ENCODE measurements at regions of chr19 and their contacts with region 1.

Region 1: GRCh38 chr19:49640113-49640898 is at the start of gene RRAS:
- H3K4me3 Mint-ChIP-seq: peak within 1 kb of the TSS; percentile 99
- H3K27ac Mint-ChIP-seq: peak within 1 kb of the TSS; percentile 100
- H3K4me1 Mint-ChIP-seq: peaks cover 70% of the 10 kb centered on the region
- H3K27me3 Mint-ChIP-seq: peaks cover 3% of the 10 kb centered on the region

Region 2: GRCh38 chr19:49451430-49452181 is 188.7 kb before region 1 on chr19 and contains the start of gene PIH1D1:
- intact Hi-C with region 1: loop called (anchors 5 kb)
- H3K4me3 Mint-ChIP-seq: peak within 1 kb of the TSS; percentile 99
- H3K27ac Mint-ChIP-seq: peak within 1 kb of the TSS; percentile 98
- H3K4me1 Mint-ChIP-seq: peaks cover 66% of the 10 kb centered on the region
- H3K27me3 Mint-ChIP-seq: no peaks in the 10 kb centered on the region

Region 3: GRCh38 chr19:49580264-49581006 is 59.9 kb before region 1 on chr19 and contains the start of gene NOSIP:
- intact Hi-C with region 1: loop called (anchors 1 kb)
- H3K4me3 Mint-ChIP-seq: peak within 1 kb of the TSS; percentile 85
- H3K27ac Mint-ChIP-seq: peak within 1 kb of the TSS; percentile 89
- H3K4me1 Mint-ChIP-seq: peaks cover 35% of the 10 kb centered on the region
- H3K27me3 Mint-ChIP-seq: no peaks in the 10 kb centered on the region

Region 4: DNA sequence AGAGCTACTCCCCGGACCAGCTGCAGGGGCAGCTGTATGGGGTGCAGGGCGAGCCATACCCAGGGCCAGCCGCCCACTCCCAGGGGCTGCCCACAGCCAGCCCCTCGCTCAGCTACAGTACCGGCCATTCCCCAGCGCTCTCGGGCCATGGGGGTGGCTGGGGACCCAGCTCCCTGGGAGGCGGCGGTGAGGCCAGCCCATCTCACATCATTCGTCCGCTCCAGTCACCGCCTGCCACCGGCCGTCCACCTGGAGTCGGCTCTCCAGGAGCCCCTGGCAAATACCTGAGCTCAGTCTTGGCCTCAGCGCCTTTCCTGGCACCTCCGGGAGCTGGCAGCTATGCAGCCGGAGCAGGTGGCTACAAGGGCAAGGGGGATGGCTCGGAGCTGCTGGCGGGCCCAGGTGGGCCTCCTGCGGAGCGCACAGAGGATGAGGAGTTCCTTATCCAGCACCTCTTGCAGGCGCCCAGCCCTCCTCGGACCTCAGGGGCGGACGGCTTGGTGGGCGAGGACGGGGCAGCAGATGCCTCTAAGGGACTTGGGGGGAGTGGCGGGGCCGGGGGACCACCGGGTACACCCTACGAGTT is 44.4 kb before region 1 on chr19:
- intact Hi-C with region 1: no loop called
- H3K4me3 Mint-ChIP-seq: no peak overlapping the region
- H3K27ac Mint-ChIP-seq: no peak overlapping the region
- H3K4me1 Mint-ChIP-seq: peaks cover 46% of the 10 kb centered on the region
- H3K27me3 Mint-ChIP-seq: no peaks in the 10 kb centered on the region

Region 5: DNA sequence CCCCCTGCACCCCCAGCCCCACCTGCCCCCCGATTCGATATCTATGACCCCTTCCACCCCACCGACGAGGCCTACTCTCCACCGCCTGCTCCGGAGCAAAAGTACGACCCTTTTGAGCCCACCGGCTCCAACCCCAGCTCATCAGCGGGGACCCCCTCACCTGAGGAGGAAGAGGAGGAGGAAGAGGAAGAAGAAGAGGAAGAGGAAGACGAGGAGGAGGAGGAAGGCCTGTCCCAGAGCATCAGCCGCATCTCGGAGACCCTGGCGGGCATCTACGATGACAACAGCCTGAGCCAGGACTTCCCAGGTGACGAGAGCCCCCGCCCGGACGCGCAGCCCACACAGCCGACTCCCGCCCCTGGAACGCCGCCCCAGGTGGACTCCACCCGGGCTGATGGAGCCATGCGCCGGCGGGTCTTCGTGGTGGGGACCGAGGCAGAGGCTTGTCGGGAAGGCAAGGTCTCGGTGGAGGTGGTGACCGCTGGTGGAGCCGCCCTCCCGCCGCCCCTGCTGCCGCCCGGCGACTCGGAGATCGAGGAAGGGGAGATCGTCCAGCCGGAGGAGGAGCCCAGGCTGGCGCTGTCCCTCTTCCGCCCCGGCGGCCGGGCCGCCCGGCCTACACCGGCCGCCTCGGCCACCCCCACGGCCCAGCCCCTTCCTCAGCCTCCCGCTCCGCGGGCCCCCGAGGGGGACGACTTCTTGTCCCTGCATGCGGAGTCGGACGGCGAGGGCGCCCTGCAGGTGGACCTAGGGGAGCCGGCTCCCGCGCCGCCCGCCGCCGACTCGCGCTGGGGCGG is 10.9 kb after region 1 on chr19:
- intact Hi-C with region 1: no loop called
- H3K4me3 Mint-ChIP-seq: no peak overlapping the region
- H3K27ac Mint-ChIP-seq: no peak overlapping the region
- H3K4me1 Mint-ChIP-seq: peaks cover under 1% of the 10 kb centered on the region
- H3K27me3 Mint-ChIP-seq: no peaks in the 10 kb centered on the region

Region 6: DNA sequence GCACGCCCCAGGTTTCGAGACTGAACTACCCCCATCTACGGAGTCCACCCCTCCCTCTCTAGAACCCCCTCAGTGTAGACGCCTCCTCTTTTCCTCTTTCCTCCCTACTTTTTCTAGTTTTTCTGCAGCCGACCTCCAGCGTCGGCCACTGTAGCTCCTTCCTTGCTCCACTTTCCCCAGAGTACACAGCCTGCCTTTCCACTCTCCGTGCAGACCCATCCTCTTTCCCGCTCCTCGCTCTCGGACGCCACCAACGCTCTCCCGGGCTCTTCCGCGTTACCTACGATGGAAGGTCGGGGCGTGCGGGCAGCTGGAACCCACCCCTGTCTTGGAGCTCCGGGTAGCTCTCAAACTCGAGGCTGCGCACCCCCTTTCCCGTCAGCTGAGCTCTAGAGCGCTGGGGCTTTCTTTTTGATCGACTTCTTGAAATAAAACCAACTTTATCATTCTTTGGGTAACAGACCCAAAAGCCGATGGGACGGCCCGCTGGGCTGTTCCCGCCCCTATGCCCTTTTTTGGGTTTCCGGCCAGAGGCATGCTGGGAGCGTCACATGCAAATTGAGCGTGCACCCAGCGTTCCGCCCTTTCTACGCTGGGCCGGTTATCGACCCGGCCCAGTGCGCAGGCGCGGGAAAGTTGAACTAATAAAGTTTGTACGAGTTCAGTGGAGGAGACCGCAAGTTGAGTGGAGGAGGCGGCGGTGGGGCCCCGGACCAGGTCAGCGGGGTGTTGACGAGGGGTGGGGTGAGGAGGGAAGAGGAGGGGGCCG is 25.2 kb after region 1 on chr19 and contains the starts of genes BCL2L12 and IRF3:
- intact Hi-C with region 1: loop called (anchors 2 kb)
- H3K4me3 Mint-ChIP-seq: peak within 1 kb of the TSS; percentile 99
- H3K27ac Mint-ChIP-seq: peak within 1 kb of the TSS; percentile 96
- H3K4me1 Mint-ChIP-seq: peaks cover 47% of the 10 kb centered on the region
- H3K27me3 Mint-ChIP-seq: no peaks in the 10 kb centered on the region

Region 7: DNA sequence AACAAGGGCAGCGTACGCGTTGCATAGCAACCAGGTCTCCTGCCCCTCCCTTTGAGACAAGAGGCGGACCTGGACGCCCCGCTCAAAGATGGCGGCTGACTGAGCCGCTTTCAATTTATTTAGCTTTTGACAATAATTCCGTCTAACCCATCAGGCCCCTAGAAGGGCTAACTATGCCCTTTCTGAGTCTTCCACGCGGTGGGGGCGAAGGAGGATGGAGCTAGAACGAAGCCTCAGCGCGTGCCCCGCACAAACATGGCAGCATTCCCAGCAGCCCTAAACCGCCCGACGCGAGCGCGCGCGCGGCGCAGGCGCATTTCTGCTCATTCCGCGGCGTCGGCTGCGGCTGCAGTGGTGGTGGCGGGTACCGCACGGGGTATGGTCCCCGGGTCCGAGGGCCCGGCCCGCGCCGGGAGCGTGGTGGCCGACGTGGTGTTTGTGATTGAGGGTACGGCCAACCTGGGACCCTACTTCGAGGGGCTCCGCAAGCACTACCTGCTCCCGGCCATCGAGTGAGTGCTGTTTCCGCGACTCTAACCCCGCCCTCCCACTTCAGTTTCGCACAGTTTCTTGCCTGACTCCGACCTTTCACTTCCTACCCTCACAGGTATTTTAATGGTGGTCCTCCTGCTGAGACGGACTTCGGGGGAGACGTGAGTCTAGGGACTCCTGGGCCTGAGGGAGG is 177.8 kb after region 1 on chr19 and contains the start of gene MED25:
- intact Hi-C with region 1: loop called (anchors 2 kb)
- H3K4me3 Mint-ChIP-seq: peak within 1 kb of the TSS; percentile 99
- H3K27ac Mint-ChIP-seq: peak within 1 kb of the TSS; percentile 98
- H3K4me1 Mint-ChIP-seq: peaks cover 34% of the 10 kb centered on the region
- H3K27me3 Mint-ChIP-seq: no peaks in the 10 kb centered on the region